Activated B cell treated with CpG ODN at 0.5 μM for 24 hours (primary cell): ENCODE measurements at regions of chrX and their contacts with region 1.

Region 1: DNA sequence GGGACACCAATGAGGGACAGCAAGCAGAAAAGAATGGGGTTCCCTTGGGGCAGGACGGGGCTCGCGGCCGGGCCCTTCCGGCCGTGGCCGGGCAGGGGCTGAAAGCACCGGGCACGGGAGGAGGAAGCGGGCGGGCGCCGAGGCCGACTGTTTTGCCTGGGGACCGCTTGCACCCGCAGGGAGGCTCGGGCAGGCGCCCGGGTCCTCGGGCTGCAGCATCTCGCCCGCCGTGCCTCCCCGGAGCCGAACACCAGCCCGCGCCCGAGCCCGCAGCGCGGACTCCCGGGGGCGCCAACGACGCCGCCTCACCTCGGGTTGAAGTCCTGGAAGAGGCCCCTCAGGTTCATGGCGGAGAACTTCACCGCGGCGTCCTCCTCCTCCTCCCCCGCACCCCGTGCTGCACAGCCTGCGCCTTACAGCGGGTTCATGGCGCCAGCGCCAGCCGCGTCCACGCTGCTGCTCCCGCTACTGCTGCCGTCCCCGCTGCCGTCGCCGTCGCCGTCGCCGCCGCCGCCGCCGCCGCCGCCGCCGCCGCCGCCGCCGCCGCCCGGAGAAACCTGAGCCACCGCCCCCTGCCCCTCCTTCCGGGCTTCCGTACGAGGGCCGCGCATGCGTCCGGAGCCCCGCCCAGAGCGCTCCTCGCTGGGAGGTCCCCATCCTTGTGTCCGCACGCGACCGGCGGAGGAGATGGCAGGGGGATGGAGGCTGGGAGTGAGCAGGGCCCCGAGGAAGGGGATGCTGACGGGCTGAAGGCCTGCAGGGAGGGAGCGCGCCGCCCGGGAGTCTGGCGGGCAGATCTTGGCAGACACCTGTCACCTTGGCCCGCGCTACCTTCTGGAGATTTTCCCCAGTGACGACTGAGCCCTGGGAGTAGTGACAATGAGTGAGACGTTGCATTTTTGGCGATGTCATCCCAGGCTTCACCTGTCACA is at the start of gene TMEM185A:
- DNase-seq: peak; percentile 64
- ATAC-seq: peak; percentile 95
- H3K4me3 Mint-ChIP-seq: peak within 1 kb of the TSS; percentile 89
- H3K27ac Mint-ChIP-seq: peak within 1 kb of the TSS; percentile 68
- H3K4me1 Mint-ChIP-seq: peaks cover 26% of the 10 kb centered on the region
- H3K27me3 Mint-ChIP-seq: peaks cover under 1% of the 10 kb centered on the region
- CTCF ChIP-seq: no peak
- total RNA-seq, gene TMEM185A: 17.4 and 19.1 TPM in 2 replicates

Region 2: DNA sequence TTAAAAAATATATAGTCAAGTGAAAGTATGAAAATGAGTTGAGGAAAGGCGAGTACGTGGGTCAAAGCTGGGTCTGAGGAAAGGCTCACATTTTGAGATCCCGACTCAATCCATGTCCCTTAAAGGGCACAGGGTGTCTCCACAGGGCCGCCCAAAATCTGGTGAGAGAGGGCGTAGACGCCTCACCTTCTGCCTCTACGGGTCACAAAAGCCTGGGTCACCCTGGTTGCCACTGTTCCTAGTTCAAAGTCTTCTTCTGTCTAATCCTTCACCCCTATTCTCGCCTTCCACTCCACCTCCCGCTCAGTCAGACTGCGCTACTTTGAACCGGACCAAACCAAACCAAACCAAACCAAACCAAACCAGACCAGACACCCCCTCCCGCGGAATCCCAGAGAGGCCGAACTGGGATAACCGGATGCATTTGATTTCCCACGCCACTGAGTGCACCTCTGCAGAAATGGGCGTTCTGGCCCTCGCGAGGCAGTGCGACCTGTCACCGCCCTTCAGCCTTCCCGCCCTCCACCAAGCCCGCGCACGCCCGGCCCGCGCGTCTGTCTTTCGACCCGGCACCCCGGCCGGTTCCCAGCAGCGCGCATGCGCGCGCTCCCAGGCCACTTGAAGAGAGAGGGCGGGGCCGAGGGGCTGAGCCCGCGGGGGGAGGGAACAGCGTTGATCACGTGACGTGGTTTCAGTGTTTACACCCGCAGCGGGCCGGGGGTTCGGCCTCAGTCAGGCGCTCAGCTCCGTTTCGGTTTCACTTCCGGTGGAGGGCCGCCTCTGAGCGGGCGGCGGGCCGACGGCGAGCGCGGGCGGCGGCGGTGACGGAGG is 1720.1 kb before region 1 on chrX and contains the start of gene FMR1:
- CTCF ChIA-PET with region 1: no interaction called
- POLR2A ChIA-PET with region 1: no interaction called
- intact Hi-C with region 1: loop called (anchors 5 kb)
- DNase-seq: peak; percentile 87
- ATAC-seq: peak; percentile 85
- H3K4me3 Mint-ChIP-seq: peak within 1 kb of the TSS; percentile 96
- H3K27ac Mint-ChIP-seq: peak within 1 kb of the TSS; percentile 90
- H3K4me1 Mint-ChIP-seq: peaks cover 41% of the 10 kb centered on the region
- H3K27me3 Mint-ChIP-seq: no peaks in the 10 kb centered on the region
- CTCF ChIP-seq: no peak
- total RNA-seq, gene FMR1: 51.8 and 60.3 TPM in 2 replicates

Region 3: DNA sequence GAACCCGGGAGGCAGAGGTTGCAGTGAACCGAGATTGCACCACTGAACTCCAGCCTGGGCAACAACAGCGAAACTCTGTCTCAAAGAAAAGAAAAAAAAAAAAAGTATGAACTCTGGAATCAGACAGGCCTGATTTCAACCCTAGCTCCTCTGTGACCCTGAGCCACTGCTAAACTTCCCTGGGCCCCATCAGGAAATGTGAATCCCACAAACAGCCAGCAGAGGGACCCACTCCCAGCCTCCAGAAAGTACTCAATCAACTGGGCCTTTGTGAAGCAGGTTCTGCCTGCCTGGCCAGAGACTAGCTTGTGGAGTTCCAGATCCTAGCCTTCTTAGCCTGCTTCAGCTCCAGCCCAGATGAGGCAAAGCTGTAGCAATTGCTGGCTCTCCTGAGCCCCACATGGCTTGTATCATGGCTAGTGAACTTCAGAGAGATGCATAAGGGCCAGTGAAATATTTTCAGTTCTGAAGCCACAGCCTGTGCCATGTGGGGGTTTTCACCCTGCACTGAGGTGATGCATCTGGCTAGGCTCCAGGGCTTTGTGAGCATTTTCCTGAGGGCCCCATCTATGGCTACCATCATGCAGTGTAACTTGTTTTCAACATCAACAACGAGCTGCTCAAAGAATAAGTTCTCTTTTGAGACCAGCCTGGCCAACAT is 119.1 kb before region 1 on chrX:
- CTCF ChIA-PET with region 1: no interaction called
- POLR2A ChIA-PET with region 1: no interaction called
- intact Hi-C with region 1: loop called (anchors 5 kb)
- DNase-seq: no peak
- ATAC-seq: peak; percentile 95
- H3K4me3 Mint-ChIP-seq: no peak overlapping the region
- H3K27ac Mint-ChIP-seq: no peak overlapping the region
- H3K4me1 Mint-ChIP-seq: peaks cover 3% of the 10 kb centered on the region
- H3K27me3 Mint-ChIP-seq: no peaks in the 10 kb centered on the region
- CTCF ChIP-seq: no peak

Region 4: DNA sequence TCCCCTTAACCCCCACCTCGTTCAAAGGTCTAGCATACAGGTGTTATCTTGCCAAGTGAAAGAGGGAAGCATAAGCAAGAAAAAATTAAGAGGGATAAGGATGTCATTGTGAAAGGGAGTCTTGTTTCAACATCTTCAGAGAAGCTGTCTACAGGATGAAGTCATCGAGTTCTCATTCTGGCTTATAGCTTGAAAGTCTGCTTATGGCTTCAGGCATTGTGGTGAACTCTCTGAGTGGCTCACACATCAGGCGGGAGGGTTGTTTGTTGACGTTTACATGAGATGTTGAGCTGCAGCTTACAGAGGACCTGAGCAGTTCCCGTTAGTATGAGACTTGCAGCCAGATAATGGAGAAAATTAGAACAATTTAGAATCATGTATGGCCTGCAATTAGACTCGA is 60.8 kb before region 1 on chrX:
- CTCF ChIA-PET with region 1: no interaction called
- POLR2A ChIA-PET with region 1: no interaction called
- intact Hi-C with region 1: no loop called
- DNase-seq: no peak
- ATAC-seq: no peak
- H3K4me3 Mint-ChIP-seq: no peak overlapping the region
- H3K27ac Mint-ChIP-seq: no peak overlapping the region
- H3K4me1 Mint-ChIP-seq: no peaks in the 10 kb centered on the region
- H3K27me3 Mint-ChIP-seq: peaks cover 6% of the 10 kb centered on the region
- CTCF ChIP-seq: no peak

Region 5: DNA sequence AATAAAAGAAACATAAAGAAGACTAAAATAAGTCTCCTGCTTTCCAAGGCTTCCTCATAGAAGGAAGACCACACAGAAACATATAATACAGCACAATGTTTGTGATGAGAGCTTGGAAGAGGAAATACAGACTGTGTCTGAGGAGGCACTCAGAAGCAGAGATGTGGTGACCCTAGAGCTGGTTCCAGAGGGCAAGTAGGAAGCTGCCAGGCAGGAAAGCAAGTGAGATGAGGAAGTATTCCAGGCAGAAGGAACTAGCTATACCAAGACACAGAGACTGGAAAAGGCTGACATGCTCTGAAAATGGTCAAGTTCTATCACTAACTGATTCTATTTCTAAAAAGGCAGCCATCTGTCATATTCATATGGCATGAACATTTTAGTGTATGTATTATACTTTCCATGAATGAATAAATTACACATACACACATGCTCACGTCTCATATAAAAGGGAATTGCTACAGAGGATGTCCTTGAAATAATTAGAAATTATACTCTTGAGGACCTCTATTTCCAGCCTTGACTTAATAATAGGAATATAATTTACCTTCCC is 19.8 kb before region 1 on chrX:
- CTCF ChIA-PET with region 1: no interaction called
- POLR2A ChIA-PET with region 1: no interaction called
- intact Hi-C with region 1: loop called (anchors 2 kb)
- DNase-seq: no peak
- ATAC-seq: no peak
- H3K4me3 Mint-ChIP-seq: no peak overlapping the region
- H3K27ac Mint-ChIP-seq: peak overlapping the region; percentile 20
- H3K4me1 Mint-ChIP-seq: peaks cover 1% of the 10 kb centered on the region
- H3K27me3 Mint-ChIP-seq: no peaks in the 10 kb centered on the region
- CTCF ChIP-seq: no peak

Region 6: DNA sequence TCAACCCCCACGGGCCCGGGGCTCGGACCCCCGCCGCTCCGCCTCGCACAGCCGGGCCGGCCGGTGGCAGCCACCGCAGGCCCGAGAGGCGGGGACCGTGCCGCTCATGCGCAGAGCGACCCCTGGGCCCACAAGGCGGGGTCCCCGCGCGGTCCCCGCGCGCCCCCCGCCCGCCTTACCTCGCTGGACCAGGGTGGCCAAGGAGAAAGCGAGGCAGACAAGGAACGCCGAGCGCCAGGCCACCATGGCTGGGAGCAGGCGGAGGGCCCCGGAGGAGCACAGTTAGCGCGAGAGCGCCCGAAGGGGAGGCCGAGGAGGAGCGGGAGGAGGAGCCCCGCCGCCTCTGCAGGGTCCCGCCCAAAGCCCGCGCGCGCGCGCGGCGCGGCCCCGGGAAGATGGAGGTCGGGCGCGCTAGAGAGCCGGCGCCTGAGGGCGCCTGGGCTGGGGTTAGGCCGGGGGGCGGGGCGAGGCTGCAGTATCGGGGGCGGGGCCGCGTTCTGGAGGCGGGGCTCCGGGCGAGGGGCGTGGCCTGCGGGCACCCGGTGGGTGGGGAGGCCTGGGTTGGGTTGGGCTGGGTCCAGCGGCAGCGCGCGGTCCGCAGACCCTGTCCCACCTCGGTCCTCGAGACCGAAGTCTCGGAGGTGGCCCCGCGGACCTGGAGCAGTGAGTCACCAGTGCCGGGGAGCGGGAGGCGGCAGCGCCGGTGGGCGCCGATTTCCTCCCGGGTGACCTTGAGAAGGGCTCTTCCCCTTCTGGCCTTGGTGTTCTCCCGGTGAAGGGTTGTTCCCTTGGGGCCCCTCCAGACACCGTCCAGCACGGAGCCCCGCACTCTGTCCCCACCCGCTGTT is 1267.1 kb after region 1 on chrX and contains the start of gene CD99L2:
- CTCF ChIA-PET with region 1: no interaction called
- POLR2A ChIA-PET with region 1: no interaction called
- intact Hi-C with region 1: loop called (anchors 5 kb)
- DNase-seq: peak; percentile 84
- ATAC-seq: peak; percentile 91
- H3K4me3 Mint-ChIP-seq: peak within 1 kb of the TSS; percentile 90
- H3K27ac Mint-ChIP-seq: peak within 1 kb of the TSS; percentile 69
- H3K4me1 Mint-ChIP-seq: peaks cover 2% of the 10 kb centered on the region
- H3K27me3 Mint-ChIP-seq: peaks cover 6% of the 10 kb centered on the region
- CTCF ChIP-seq: no peak
- total RNA-seq, gene CD99L2: 12.5 and 12.7 TPM in 2 replicates

Region 7: DNA sequence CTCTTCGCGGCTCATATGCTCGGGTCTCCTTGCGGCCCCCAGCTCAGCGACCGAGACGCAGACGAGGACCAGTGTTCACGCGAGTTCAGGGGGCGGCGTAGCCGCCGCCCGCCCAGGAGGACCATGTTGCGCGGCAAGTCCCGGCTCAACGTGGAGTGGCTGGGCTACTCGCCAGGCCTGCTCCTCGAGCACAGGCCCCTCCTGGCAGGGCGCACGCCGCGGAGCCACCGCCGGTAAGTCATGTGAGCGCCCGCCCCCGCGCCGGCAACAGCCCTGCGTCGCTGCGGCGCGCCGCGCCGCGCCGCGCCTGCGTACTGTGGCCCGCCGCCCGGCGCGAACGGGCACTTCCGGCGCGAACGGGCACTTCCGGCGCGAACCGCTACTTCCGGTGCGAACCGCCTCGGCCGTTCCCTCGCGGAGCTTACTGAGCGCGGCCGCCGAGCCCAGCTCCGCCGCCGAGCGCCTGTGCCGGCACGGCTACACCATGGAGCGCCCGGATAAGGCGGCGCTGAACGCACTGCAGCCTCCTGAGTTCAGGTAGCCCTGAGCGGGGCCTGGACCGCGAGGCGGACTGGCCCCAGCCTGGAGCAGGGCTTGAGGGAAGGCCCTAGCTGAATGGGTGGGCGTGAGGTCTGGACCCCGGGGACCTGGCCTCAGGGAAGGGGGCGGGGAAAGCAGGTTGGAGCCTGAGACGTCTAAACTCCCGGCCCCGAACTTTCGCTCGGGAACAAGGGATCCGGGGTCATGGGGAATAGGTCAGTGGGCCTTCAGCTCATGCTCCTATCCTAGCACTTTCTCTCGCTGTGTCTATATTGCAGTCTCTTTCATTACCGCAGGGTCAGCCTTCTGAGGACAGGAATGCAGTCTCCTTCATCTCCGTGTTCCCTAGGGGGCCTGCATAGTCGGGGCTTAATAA is 1765.6 kb after region 1 on chrX and contains the start of gene VMA21:
- CTCF ChIA-PET with region 1: no interaction called
- POLR2A ChIA-PET with region 1: no interaction called
- intact Hi-C with region 1: loop called (anchors 5 kb)
- DNase-seq: peak; percentile 79
- ATAC-seq: peak; percentile 87
- H3K4me3 Mint-ChIP-seq: peak within 1 kb of the TSS; percentile 87
- H3K27ac Mint-ChIP-seq: peak within 1 kb of the TSS; percentile 95
- H3K4me1 Mint-ChIP-seq: peaks cover 43% of the 10 kb centered on the region
- H3K27me3 Mint-ChIP-seq: no peaks in the 10 kb centered on the region
- CTCF ChIP-seq: no peak
- total RNA-seq, gene VMA21: 26.1 and 26.5 TPM in 2 replicates